CD14-positive monocyte (primary cell): ENCODE measurements at regions of chr16 and their contacts with region 1.

Region 1: DNA sequence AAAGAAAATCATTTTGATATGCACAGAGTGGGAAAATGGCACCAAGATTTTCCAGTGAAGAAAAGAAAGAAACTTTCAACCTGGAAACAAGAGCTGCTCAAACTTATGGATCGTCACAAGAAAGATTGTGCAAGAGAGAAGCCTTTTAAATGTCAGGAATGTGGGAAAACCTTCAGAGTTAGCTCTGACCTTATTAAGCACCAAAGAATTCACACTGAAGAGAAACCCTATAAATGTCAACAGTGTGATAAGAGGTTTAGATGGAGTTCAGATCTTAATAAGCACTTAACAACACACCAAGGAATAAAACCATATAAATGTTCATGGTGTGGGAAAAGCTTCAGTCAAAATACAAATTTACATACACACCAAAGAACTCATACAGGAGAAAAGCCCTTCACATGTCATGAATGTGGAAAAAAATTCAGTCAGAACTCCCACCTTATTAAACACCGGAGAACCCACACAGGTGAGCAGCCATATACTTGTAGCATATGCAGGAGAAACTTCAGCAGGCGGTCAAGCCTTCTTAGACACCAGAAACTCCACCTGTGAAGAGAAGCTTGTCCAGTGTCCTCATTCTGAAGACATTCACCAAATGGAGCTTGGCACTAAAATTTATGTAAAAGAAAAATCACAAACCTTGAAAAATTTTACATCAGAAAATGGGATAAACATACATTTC is 12.2 kb downstream of the ZNF75A start:
- DNase-seq: no peak
- H3K4me3 ChIP-seq: peak overlapping the region in 1 of 3 experiments; percentile 45
- H3K4me3 Mint-ChIP-seq: no peak overlapping the region
- H3K27ac ChIP-seq: no peak overlapping the region
- H3K27ac Mint-ChIP-seq: no peak overlapping the region
- H3K4me1 ChIP-seq: no peaks in the 10 kb centered on the region
- H3K4me1 Mint-ChIP-seq: no peaks in the 10 kb centered on the region
- H3K27me3 ChIP-seq: no peaks in the 10 kb centered on the region
- H3K27me3 Mint-ChIP-seq: peaks cover 0 to 2% (median 0%) of the 10 kb centered on the region in 3 donors
- CTCF ChIP-seq: no peak

Region 2: DNA sequence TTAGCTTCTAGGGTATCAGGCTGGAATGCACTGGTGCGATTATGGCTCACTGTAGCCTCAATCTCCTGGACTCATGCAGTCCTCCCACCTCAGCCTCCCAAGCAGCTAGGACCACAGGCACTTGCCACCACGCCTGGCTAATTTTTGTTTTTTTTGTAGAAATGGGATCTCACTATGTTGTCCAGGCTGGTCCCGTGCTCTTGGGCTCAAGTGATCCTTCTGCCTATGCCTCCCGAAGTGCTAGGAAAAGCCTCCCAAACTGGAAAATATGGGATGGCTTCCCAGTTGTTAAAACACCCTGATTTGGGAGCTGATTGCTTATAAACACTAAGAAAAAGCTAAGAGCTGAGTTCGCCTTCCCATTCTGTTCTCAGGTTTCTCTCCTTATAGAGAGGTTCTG is 40.8 kb before region 1 on chr16:
- intact Hi-C with region 1: loop called in 1 of 2 experiments (anchors 5 kb)
- DNase-seq: no peak
- H3K4me3 ChIP-seq: no peak overlapping the region
- H3K4me3 Mint-ChIP-seq: no peak overlapping the region
- H3K27ac ChIP-seq: no peak overlapping the region
- H3K27ac Mint-ChIP-seq: no peak overlapping the region
- H3K4me1 ChIP-seq: peaks cover 7 to 8% of the 10 kb centered on the region in 2 donors
- H3K4me1 Mint-ChIP-seq: peaks cover 4% of the 10 kb centered on the region
- H3K27me3 ChIP-seq: peaks cover 3 to 20% of the 10 kb centered on the region in 2 donors
- H3K27me3 Mint-ChIP-seq: peaks cover 18 to 30% (median 23%) of the 10 kb centered on the region in 3 donors
- CTCF ChIP-seq: no peak

Region 3: GRCh38 chr16:3377917-3378316 is 60.5 kb after region 1 on chr16:
- intact Hi-C with region 1: loop called (anchors 5 to 10 kb)
- DNase-seq: no peak
- H3K4me3 ChIP-seq: no peak overlapping the region
- H3K4me3 Mint-ChIP-seq: no peak overlapping the region
- H3K27ac ChIP-seq: no peak overlapping the region
- H3K27ac Mint-ChIP-seq: no peak overlapping the region
- H3K4me1 ChIP-seq: no peaks in the 10 kb centered on the region
- H3K4me1 Mint-ChIP-seq: no peaks in the 10 kb centered on the region
- H3K27me3 ChIP-seq: no peaks in the 10 kb centered on the region
- H3K27me3 Mint-ChIP-seq: peaks cover 1 to 8% (median 4%) of the 10 kb centered on the region in 3 donors
- CTCF ChIP-seq: no peak

Region 4: DNA sequence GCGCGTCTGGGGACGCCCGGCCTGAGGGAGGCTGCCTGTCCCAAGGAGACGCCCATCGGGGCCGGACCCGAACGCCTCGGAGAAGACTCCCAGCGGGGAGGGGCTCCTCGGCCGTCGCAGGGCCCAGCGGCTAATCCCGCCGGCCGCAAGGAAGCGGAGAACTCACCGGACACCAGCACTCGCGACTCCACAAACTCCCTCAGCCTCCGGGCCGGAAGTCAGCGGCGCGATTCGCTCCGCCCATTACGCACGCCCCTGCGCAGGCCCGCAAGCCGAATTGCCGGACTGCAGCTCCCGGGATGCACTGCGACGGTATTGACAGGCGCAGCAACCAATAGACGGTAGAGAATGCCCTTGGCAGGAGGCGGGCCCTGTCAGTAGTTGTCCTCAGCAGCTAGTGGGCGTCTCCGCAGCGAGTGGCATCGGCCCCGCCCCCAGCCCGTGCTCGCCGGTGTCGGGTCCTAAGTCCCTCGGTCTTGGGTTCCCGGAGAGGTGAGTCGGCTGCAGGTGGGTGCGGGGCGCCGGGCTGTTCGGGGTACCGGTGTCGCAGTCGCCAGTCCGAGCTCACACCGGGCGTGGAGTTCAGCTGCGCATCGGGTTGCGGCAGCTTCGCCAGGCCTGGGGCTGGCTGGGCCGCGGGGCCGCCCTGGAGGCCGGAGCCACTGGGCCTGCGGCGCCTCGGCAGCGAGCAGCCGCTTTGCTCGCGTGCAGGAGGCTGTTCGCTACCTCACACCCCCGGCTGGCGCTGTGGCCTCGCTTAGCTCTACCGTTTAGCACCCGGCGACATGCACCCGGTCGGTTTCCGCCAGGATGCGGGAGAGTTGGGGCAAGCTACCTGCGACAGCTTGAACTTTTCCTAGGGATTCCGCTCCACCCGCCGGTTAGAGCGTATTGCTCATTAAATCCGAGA is 83.6 kb after region 1 on chr16 and contains the starts of genes ZNF174 and ZSCAN32:
- intact Hi-C with region 1: no loop called
- DNase-seq: peak; percentile 98 to 99 (median 98)
- H3K4me3 ChIP-seq: peak within 1 kb of the TSS; percentile 72 to 90 (median 86)
- H3K4me3 Mint-ChIP-seq: peak within 1 kb of the TSS; percentile 85 to 96
- H3K27ac ChIP-seq: peak within 1 kb of the TSS; percentile 39 to 80
- H3K27ac Mint-ChIP-seq: peak within 1 kb of the TSS; percentile 79 to 89 (median 82)
- H3K4me1 ChIP-seq: peaks cover 19 to 30% of the 10 kb centered on the region in 2 donors
- H3K4me1 Mint-ChIP-seq: peaks cover 25% of the 10 kb centered on the region
- H3K27me3 ChIP-seq: no peaks in the 10 kb centered on the region
- H3K27me3 Mint-ChIP-seq: peaks cover 0 to 2% (median 0%) of the 10 kb centered on the region in 3 donors
- CTCF ChIP-seq: no peak
- polyA plus RNA-seq, gene ZNF174: 2.5 to 5.6 (median 4.9) TPM
- polyA plus RNA-seq, gene ZSCAN32: 5.7 to 7.7 (median 7.2) TPM